ENCODE measurements at regions of chr12 and their contacts with region 1.

Region 1: GRCh38 chr12:50825372-50825838 is 17.3 kb upstream of the TMPRSS12 start:
- DNase-seq: peak; percentile 43
- H3K4me3 ChIP-seq: no peak overlapping the region
- H3K27ac ChIP-seq: no peak overlapping the region
- H3K4me1 ChIP-seq: peaks cover 9% of the 10 kb centered on the region
- H3K27me3 ChIP-seq: no peaks in the 10 kb centered on the region
- CTCF ChIP-seq: peak; percentile 32 to 37

Region 2: DNA sequence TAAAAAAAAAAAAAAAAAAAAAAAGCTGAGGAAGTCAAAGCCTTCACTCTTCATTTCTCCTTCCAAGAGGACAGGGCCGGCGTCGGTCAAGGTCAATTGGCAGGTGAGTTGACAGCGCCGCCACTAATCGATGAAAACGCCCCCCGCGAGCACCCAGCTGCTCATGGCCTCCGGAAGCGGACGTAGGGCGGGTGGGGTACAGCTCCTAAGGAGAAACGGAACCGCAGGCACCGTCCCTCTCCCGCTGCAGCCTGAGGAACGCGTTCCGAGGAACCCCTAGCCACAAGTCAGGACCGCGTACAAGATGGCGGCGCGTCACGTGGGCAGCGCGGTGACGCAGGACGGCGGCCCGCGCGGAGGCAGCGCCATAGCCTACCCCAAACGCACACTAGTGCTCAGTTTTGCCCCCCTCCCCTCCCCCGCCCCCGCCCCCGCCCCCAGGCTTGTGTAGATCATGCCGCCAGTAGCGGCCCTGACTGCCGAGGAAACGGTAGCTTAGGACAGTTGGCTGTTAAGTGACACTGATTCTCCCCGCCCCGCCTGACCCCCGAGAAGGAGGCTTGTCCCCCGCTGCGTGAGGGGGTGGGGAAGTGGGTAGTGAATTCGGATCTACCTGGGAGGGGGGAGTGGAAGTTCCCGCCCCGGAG is 61.6 kb before region 1 on chr12 and contains the start of gene ATF1:
- CTCF ChIA-PET with region 1: interaction called, 16 read pairs
- dilution Hi-C with region 1: no loop called
- in situ Hi-C with region 1: no loop called
- intact Hi-C with region 1: loop called (anchors 1 kb)
- DNase-seq: peak; percentile 85
- H3K4me3 ChIP-seq: peak within 1 kb of the TSS; percentile 83 to 95 (median 90)
- H3K27ac ChIP-seq: peak within 1 kb of the TSS; percentile 87
- H3K4me1 ChIP-seq: peaks cover 6% of the 10 kb centered on the region
- H3K27me3 ChIP-seq: no peaks in the 10 kb centered on the region
- CTCF ChIP-seq: no peak
- total RNA-seq, gene ATF1: 20.3 to 33.8 TPM

Region 3: GRCh38 chr12:51025836-51026638 is 200.6 kb after region 1 on chr12 and contains the start of gene SLC11A2:
- CTCF ChIA-PET with region 1: no interaction called
- dilution Hi-C with region 1: no loop called
- in situ Hi-C with region 1: no loop called
- intact Hi-C with region 1: loop called (anchors 1 kb)
- DNase-seq: peak; percentile 95
- H3K4me3 ChIP-seq: peak within 1 kb of the TSS; percentile 73 to 87 (median 82)
- H3K27ac ChIP-seq: peak within 1 kb of the TSS; percentile 98
- H3K4me1 ChIP-seq: peaks cover 39% of the 10 kb centered on the region
- H3K27me3 ChIP-seq: no peaks in the 10 kb centered on the region
- CTCF ChIP-seq: no peak
- total RNA-seq, gene SLC11A2: 42.5 to 56.3 TPM

Region 4: DNA sequence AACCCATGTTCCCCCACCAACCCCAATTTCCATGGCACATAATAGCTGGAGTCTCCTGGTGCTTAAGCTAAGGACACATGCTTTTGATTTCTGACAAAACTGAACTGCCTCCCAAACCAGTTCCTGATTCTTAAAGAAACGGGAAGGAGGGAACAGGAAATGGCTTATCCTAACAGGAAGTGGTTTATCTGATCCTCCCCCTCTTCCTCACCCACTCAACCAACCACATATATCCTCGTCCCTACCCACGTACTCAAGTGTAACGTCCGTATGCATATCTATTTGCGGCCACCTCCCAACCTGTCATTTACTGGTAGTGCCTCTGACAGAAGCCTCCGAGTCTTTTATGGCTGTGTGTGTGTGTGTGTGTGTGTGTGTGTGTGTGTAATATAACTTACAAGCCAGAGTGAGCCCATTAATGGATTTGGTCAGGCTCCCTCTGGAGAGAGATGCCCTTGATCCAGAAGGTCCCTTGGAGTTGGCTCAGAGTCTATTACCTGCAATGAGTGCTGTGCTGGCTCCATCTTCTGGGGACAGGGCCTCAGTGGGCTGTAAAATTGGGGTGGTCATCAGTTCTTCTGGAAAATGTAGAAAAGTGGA is 420.9 kb after region 1 on chr12:
- CTCF ChIA-PET with region 1: no interaction called
- dilution Hi-C with region 1: no loop called
- in situ Hi-C with region 1: no loop called
- intact Hi-C with region 1: loop called (anchors 10 kb)
- DNase-seq: no peak
- H3K4me3 ChIP-seq: no peak overlapping the region
- H3K27ac ChIP-seq: no peak overlapping the region
- H3K4me1 ChIP-seq: no peaks in the 10 kb centered on the region
- H3K27me3 ChIP-seq: no peaks in the 10 kb centered on the region
- CTCF ChIP-seq: no peak

Region 5: GRCh38 chr12:51307655-51308593 is 482.5 kb after region 1 on chr12:
- CTCF ChIA-PET with region 1: no interaction called
- dilution Hi-C with region 1: no loop called
- in situ Hi-C with region 1: no loop called
- intact Hi-C with region 1: no loop called
- DNase-seq: peak; percentile 84
- H3K4me3 ChIP-seq: no peak overlapping the region
- H3K27ac ChIP-seq: no peak overlapping the region
- H3K4me1 ChIP-seq: peaks cover 11% of the 10 kb centered on the region
- H3K27me3 ChIP-seq: no peaks in the 10 kb centered on the region
- CTCF ChIP-seq: no peak